Naive thymus-derived CD8-positive, alpha-beta T cell (primary cell): ENCODE measurements at regions of chr6 and their contacts with region 1.

Region 1: DNA sequence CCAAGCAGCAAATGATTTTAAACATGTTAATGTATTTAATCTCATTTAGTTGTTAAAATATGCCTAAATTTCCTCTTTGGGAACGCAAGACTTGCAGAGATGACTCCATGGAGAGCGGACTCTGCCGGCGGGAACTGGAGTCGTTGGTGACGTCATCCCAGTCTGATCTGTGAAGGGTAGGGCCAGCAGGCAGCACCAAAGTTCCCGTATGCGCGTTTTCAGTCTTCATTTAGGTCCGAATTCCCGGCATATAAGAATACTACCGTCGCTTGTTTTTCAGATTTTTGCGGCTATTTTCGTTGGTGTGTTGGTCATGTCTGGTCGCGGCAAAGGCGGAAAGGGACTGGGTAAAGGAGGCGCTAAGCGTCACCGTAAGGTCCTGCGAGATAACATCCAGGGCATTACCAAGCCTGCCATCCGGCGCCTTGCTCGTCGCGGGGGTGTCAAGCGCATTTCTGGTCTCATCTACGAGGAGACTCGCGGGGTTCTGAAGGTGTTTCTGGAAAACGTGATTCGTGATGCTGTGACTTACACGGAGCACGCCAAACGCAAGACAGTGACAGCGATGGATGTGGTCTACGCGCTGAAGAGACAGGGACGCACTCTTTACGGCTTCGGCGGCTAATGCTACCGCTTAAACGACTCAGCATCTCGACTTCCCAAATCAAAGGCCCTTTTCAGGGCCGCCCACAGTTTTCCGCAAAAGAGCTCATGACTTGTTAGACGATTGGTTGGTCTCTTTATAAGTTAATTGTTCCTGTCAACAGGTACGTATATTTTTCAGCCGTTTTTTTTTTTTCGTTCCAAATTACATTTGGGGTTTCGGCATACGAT is 117.3 kb downstream of the HFE start:
- DNase-seq: peak; percentile 69 to 97 (median 88)
- ATAC-seq: peak; percentile 68 to 71
- H3K4me3 Mint-ChIP-seq: no peak overlapping the region
- H3K27ac Mint-ChIP-seq: no peak overlapping the region
- H3K4me1 Mint-ChIP-seq: peaks cover 14 to 36% (median 26%) of the 10 kb centered on the region in 4 donors
- H3K27me3 Mint-ChIP-seq: peaks cover 0 to 4% (median 0%) of the 10 kb centered on the region in 5 donors

Region 2: GRCh38 chr6:26031595-26032339 is 172.8 kb before region 1 on chr6:
- POLR2A ChIA-PET with region 1: interaction called, 56 read pairs
- DNase-seq: peak; percentile 71 to 96 (median 91)
- ATAC-seq: peak; percentile 67 to 71
- H3K4me3 Mint-ChIP-seq: peak overlapping the region; percentile 94 to 97 (median 95)
- H3K27ac Mint-ChIP-seq: peak overlapping the region; percentile 93 to 99 (median 96)
- H3K4me1 Mint-ChIP-seq: peaks cover 11 to 52% (median 41%) of the 10 kb centered on the region in 4 donors
- H3K27me3 Mint-ChIP-seq: peaks cover 0 to 2% (median 0%) of the 10 kb centered on the region in 5 donors

Region 3: DNA sequence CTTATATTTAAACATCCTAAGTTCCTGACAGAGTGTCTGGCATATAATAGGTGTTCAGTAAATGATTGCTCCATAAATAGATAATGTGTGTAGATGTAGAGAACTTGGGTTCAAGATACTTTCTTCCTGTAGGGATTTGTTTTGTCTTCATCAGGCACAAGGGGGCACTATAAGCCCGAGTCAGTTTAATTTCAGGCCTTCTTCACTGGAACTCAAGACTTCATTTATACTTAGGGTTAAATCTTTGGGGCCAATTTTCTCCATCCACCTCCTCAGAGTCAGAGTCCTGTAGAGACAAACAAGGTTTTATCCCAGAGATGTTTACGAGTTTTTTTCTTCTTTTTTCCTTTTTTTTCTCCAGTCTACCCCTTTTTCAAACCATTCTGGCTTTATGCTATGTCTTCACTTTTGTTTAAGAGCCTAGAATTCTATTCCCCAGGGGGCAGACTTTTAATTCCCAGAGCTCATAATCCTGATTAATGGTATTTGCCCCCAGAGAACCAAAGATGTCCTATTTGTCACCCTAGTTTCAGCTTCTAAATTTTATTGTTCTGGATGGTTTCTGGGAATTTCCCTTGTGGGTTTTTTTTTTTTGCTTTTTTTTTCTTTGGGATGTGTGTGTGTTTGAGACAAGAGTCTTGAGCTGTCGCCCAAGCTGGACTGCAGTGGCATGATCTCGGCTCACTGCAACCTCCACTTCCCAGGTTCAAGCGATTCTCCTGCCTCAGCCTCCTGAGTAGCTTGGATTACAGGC is 28.9 kb before region 1 on chr6:
- POLR2A ChIA-PET with region 1: interaction called, 288 read pairs
- DNase-seq: peak in 9 of 10 donors; percentile 21 to 76 (median 59)
- ATAC-seq: no peak
- H3K4me3 Mint-ChIP-seq: peak overlapping the region in 5 of 10 donors; percentile 33 to 62 (median 51)
- H3K27ac Mint-ChIP-seq: peak overlapping the region; percentile 11 to 82 (median 59)
- H3K4me1 Mint-ChIP-seq: peaks cover 15 to 43% (median 34%) of the 10 kb centered on the region in 4 donors
- H3K27me3 Mint-ChIP-seq: no peaks in the 10 kb centered on the region

Region 4: GRCh38 chr6:26183581-26184366 is 20.8 kb before region 1 on chr6:
- POLR2A ChIA-PET with region 1: interaction called, 578 read pairs
- DNase-seq: peak; percentile 22 to 82 (median 58)
- ATAC-seq: peak; percentile 92 to 94
- H3K4me3 Mint-ChIP-seq: peak overlapping the region; percentile 93 to 100 (median 98)
- H3K27ac Mint-ChIP-seq: peak overlapping the region; percentile 70 to 98 (median 95)
- H3K4me1 Mint-ChIP-seq: peaks cover 27 to 48% (median 46%) of the 10 kb centered on the region in 4 donors
- H3K27me3 Mint-ChIP-seq: no peaks in the 10 kb centered on the region

Region 5: DNA sequence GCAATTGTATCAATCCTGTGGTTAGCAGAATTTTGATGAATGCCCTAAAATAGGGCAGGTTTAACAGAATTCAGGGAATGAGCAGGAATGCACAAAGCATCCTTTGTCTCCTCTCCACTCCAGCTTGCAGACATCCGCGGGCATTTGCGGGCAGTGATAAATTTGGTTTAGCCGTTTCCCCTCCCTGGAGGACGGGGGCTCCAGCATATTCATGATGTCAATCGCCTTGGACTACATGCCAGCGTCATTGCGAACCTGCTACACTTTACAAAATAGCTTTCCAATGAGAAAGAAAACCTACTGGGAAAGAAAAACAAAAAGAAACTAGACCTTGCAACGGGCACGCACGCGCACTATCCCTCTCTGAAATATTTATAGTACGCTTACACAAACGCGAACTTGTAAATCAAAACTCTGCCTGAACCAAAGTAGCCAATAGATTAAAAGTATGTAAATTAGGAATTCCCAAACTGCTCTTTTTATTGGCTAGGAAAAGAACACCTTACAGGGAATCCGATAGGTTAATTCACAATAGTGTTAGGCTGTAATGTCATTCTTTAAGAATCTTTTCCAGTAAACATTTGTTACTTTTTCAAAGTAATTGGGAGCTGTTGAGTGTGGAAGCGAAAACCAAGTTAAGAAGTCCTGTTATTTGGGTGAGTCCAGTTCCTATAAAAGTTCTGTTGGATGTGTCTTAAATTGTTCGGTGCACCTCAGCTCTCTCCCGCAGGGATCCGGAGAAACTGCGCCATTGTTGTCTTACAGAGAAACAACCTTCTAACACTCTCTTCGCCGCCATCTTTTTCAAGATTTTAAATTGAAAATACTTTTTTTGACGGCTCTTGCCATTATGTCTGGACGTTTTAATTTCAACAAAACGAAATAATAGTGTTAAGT is 19.3 kb after region 1 on chr6:
- POLR2A ChIA-PET with region 1: interaction called, 603 read pairs
- DNase-seq: peak; percentile 54 to 85 (median 71)
- ATAC-seq: peak; percentile 89 to 90
- H3K4me3 Mint-ChIP-seq: no peak overlapping the region
- H3K27ac Mint-ChIP-seq: no peak overlapping the region
- H3K4me1 Mint-ChIP-seq: peaks cover 4 to 25% (median 14%) of the 10 kb centered on the region in 4 donors
- H3K27me3 Mint-ChIP-seq: no peaks in the 10 kb centered on the region

Region 6: DNA sequence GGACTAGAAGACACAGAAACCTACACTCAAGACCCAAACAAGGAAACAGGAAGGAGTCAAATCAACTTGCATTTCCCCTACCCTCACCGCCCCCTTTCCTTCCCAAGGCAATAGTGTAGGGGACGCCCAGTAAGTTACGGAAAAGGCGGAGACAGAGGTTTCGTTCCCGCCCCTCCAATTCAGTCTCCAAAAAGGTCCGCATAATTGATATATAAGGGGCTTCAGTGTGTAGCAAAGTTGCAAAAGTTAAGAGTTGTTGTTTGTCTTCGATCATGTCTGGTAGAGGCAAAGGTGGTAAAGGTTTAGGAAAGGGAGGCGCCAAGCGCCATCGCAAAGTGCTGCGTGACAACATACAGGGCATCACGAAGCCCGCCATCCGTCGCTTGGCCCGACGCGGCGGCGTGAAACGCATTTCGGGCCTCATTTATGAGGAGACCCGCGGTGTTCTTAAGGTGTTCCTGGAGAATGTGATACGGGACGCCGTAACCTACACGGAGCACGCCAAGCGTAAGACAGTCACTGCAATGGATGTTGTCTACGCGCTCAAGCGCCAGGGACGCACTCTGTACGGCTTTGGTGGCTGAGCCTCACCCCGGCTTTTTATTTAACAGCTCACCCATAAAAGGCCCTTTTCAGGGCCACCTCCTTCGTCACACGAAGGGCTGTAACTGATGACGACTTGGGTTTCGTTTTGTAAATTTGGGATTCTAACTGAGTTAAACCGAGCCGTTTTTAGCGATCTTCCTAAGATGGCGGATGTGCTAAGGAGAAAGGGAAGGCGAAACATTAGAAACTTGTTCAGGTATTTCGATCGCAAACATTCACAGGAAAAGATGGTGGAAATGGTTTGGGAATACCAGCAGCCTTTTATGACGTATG is 35.8 kb after region 1 on chr6:
- POLR2A ChIA-PET with region 1: interaction called, 360 read pairs
- DNase-seq: peak; percentile 39 to 90 (median 80)
- ATAC-seq: peak; percentile 82 to 85
- H3K4me3 Mint-ChIP-seq: peak overlapping the region; percentile 82 to 95 (median 88)
- H3K27ac Mint-ChIP-seq: peak overlapping the region; percentile 92 to 99 (median 98)
- H3K4me1 Mint-ChIP-seq: peaks cover 9 to 25% (median 22%) of the 10 kb centered on the region in 4 donors
- H3K27me3 Mint-ChIP-seq: no peaks in the 10 kb centered on the region

Region 7: DNA sequence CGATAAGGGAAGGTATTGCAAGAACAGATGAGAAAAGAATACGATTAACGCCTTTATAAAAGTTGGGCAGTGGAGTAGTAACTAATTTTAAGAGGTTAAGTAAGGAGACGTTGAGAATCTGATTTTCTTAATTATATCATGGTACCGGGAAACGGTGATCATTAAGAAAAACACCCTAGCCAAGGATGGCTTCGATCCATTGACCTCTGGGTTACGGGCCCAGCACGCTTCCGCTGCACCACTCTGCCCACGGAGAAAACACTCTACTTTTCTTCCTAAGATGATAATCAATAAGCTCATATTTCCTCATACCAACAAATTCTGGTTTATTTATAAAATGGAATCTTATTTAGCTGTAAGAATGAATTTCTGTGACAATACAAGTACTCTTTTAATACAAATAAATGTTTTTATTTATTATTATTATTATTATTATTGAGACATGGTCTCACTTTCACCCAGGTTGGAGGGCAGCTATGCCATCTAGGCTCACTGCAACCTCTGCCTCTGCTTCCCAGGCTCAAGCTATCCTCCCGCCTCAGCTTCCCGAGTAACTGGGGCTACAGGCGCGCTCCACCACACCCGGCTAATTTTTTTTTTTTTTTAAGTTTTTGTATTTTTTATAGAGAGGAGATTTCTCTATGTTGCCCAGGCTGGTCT is 1099.2 kb after region 1 on chr6:
- POLR2A ChIA-PET with region 1: no interaction called
- DNase-seq: no peak
- ATAC-seq: no peak
- H3K4me3 Mint-ChIP-seq: no peak overlapping the region
- H3K27ac Mint-ChIP-seq: peak overlapping the region in 1 of 10 donors; percentile 86
- H3K4me1 Mint-ChIP-seq: no peaks in the 10 kb centered on the region
- H3K27me3 Mint-ChIP-seq: peaks cover 61 to 100% (median 72%) of the 10 kb centered on the region in 5 donors